ENCODE measurements at regions of chr1 and their contacts with region 1.

Region 1: GRCh38 chr1:6141592-6141991 is 38.5 kb downstream of the CHD5 start:
- DNase-seq: peak; percentile 44 to 77 (median 71)
- H3K4me3 ChIP-seq: no peak overlapping the region
- H3K27ac ChIP-seq: no peak overlapping the region
- H3K4me1 ChIP-seq: peaks cover 0 to 23% (median 11%) of the 10 kb centered on the region in 4 experiments
- H3K27me3 ChIP-seq: no peaks in the 10 kb centered on the region

Region 2: GRCh38 chr1:6082430-6082971 is 59.1 kb before region 1 on chr1:
- CTCF ChIA-PET with region 1: no interaction called
- POLR2A ChIA-PET with region 1: no interaction called
- DNase-seq: no peak
- H3K4me3 ChIP-seq: no peak overlapping the region
- H3K27ac ChIP-seq: no peak overlapping the region
- H3K4me1 ChIP-seq: no peaks in the 10 kb centered on the region
- H3K27me3 ChIP-seq: no peaks in the 10 kb centered on the region

Region 3: GRCh38 chr1:6108937-6109614 is 32.5 kb before region 1 on chr1:
- CTCF ChIA-PET with region 1: interaction called, 11 read pairs
- POLR2A ChIA-PET with region 1: no interaction called
- DNase-seq: peak; percentile 76 to 89 (median 82)
- H3K4me3 ChIP-seq: no peak overlapping the region
- H3K27ac ChIP-seq: no peak overlapping the region
- H3K4me1 ChIP-seq: peaks cover 0 to 7% (median 2%) of the 10 kb centered on the region in 4 experiments
- H3K27me3 ChIP-seq: peaks cover 0 to 11% (median 0%) of the 10 kb centered on the region in 5 experiments

Region 4: DNA sequence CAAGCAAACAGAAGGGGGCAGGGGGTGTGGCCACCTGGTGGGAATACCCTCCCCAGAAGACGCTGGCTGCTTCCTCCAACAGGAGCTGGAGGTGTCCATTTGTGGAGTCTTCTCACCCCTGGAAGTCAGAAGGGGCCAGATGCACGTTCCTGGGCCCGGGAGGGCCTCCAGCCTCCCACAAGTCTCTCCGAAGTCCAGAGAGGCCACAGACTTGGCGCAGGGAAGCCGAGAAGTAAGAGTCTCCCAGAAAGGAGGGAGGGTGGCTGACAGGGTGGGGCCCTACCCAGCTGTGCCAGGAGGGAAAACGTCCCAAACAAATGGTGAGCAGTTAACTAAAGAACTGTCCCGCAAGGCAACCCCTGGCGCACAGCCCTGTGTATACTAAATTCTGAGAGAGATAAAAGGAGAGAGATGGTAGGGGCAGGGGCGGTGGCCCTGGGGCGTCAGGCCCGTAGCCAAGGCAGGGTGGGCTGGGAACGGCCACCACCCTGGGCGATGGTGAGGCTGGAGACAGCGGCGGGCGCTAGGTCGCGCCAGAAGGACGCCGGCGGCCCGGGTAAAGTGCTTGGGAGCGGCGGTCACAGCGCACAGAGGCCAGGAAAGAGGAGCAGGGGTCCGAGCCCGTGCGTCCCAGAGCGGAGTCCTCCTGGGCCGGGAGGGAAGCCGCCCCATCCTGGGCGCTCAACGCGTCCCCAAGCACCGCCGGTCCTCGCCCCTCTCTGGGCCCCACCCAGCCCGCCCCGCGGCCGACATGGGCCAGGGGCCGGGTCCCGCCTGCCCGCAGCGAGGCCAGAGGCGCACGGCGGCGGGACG is 37.4 kb after region 1 on chr1:
- CTCF ChIA-PET with region 1: no interaction called
- POLR2A ChIA-PET with region 1: no interaction called
- DNase-seq: no peak
- H3K4me3 ChIP-seq: peak overlapping the region in 2 of 7 experiments; percentile 26 to 42
- H3K27ac ChIP-seq: no peak overlapping the region
- H3K4me1 ChIP-seq: peaks cover 0 to 27% (median 16%) of the 10 kb centered on the region in 4 experiments
- H3K27me3 ChIP-seq: peaks cover 5 to 78% (median 21%) of the 10 kb centered on the region in 5 experiments